Psoas muscle (tissue), 8 donors: ENCODE measurements at regions of chr17 and their contacts with region 1.

Region 1: DNA sequence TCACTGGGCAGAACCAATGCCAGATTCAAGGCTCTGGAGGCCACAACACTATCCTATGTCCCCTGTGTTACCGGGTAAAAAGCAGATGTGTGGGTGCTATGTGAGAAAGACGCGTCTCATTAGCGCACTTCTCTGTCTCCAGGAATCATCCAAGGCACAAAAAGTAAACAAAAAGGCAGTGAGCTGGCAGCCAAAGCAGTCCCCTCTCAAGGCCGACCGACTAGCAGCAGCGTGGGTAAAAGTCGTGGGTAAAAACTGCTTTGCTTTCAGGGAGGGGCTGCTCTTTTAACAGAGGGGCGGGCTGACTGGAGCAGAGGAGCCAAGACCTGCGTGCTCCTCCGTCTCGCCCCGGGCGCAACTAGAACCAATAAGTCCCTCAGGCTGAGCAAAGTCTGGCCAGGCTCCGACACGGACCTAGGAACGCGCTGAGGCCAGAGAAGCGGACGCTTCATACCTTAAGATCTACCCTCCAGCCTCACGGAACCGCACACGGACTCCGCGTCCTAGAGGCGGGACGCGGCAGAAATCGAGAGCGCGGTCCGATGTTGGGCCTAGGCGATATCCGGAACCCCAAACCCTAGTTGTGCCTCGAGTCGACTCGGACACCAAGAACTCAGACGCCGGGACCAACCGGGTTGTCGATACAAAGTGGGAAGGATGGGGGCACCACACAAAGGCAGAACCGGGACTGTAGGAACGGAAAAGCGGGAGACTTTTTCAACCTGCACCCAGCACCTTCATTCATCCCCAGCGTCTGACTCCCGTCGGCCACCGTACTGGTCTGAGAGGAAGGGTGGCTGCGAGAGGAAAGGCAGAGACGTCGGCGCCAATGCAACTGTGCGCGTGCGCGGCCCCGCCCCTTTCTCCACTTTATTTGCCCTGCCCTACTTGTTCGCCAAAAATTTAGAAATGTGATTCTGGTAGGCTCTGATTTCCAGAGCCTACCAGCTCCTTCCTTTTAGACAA is at the start of gene INTS2:
- DNase-seq: peak; percentile 98
- ATAC-seq: peak; percentile 96 to 98 (median 97)
- H3K4me3 ChIP-seq: peak within 1 kb of the TSS; percentile 89
- H3K27ac ChIP-seq: peak within 1 kb of the TSS; percentile 89
- H3K4me1 ChIP-seq: peaks cover 14% of the 10 kb centered on the region
- H3K27me3 ChIP-seq: no peaks in the 10 kb centered on the region
- CTCF ChIP-seq: no peak
- total RNA-seq, gene INTS2: 6.2 to 8.0 (median 6.9) TPM

Region 2: DNA sequence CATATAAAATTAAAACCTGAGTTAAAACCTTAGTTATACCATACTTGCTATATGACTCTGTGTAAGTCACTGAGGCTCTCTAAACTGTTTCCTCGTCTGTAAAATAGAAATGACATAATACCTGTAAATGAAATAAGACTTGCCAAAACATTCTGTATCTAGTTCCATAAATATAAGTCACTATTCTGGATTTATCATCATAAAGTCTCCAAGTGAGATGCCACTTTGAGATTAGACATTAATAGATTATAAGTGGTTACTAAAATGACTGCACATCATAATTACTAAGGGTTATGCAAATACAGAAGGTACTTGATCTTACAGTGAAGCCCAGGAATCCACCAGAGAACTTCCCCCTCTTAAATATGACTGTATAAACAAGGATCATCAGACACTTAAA is 52.2 kb before region 1 on chr17:
- intact Hi-C with region 1: no loop called
- DNase-seq: no peak
- ATAC-seq: no peak
- H3K4me3 ChIP-seq: no peak overlapping the region
- H3K27ac ChIP-seq: no peak overlapping the region
- H3K4me1 ChIP-seq: no peaks in the 10 kb centered on the region
- H3K27me3 ChIP-seq: no peaks in the 10 kb centered on the region
- CTCF ChIP-seq: no peak

Region 3: GRCh38 chr17:62065598-62066468 is 138.3 kb after region 1 on chr17:
- intact Hi-C with region 1: loop called (anchors 5 kb)
- DNase-seq: peak; percentile 99 to 100
- ATAC-seq: peak; percentile 94 to 98 (median 98)
- H3K4me3 ChIP-seq: peak overlapping the region; percentile 95
- H3K27ac ChIP-seq: peak overlapping the region; percentile 99
- H3K4me1 ChIP-seq: peaks cover 21% of the 10 kb centered on the region
- H3K27me3 ChIP-seq: no peaks in the 10 kb centered on the region
- CTCF ChIP-seq: peak; percentile 90